ENCODE measurements at regions of chr6 and their contacts with region 1.

Region 1: DNA sequence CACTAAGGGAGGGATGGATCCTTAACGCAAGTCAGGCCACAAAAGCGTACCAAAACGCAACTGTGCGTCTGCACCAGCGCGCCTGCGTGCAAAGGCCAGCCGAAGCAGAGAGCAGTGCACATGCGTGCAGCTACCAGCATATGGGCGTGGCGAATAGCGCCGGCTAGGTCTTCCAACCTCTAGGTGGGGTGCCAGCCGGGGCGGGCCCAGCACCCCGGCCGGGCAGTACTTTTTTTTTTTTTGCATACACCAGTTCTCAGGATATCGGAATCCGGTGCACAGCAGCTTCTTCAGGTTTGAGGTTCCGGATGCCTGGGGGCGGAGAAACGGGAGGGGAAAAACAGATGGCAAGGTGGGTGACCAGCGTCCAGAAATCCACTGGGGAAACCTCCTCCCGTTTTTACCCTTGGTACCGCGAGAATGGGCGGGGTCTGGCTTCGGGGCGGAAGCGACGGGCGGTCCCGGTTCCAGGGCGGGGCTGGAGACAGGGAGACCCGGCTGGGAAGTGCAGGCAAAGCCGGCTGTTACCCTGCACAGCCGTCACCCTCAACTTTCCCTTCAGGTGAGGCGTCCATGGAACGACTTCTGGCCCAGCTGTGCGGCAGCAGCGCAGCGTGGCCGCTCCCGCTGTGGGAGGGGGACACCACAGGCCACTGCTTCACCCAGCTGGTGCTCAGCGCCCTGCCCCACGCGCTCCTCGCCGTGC is at the start of gene ABCC10:
- DNase-seq: peak; percentile 96
- ATAC-seq: peak; percentile 98 to 99
- total RNA-seq, gene ABCC10: 12.5 to 13.7 TPM

Region 2: GRCh38 chr6:43369174-43370022 is 58.2 kb before region 1 on chr6 and contains the start of gene ZNF318:
- intact Hi-C with region 1: loop called in 1 of 2 experiments (anchors 5 kb)
- DNase-seq: peak; percentile 96
- ATAC-seq: peak; percentile 98 to 99
- total RNA-seq, gene ZNF318: 9.8 to 10.0 TPM